Activated CD4-positive, alpha-beta memory T cell treated with anti-CD3 and anti-CD28 coated beads for 36 hours (primary cell): ENCODE measurements at regions of chr12 and their contacts with region 1.

Region 1: DNA sequence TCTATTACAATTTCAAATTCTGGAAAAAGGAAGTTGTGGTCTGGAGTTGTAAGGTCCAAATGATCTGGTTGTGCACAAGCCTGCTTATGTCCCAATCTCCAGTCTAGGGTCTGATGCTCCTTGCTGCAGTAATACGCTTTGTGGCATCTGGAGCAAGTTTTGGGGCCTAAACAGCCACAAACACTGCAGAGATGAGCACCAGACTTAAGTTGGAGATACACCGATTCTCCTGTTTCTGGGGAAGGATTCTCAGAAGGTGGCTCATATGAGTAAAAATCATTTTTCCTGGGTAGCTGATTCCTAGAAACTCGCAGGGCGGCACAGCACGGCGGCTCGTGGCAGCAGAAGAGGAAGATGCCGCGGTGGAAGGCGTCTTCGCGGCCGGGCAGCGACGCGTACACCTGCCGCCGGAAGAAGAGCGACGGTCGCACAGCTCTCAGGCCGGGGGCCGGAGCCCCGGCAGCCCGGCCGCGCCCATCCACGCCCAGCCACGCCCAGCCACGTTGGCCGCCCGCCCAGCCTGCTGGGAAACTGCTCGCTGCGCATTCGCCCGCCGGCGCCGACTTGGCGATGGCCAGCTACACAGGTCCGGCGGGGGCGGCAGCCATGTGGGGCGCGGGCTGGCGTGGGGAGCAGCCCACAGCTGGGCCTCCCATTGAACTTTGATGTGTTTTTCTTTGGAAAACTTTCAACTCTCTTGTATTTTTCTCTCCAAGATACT is 129.0 kb downstream of the ASCL4 start:
- DNase-seq: peak; percentile 83
- H3K4me3 Mint-ChIP-seq: peak overlapping the region; percentile 75
- H3K27ac Mint-ChIP-seq: no peak overlapping the region
- H3K4me1 Mint-ChIP-seq: peaks cover 8% of the 10 kb centered on the region
- H3K27me3 Mint-ChIP-seq: peaks cover 39% of the 10 kb centered on the region

Region 2: GRCh38 chr12:107702106-107702505 is 201.4 kb before region 1 on chr12:
- CTCF ChIA-PET with region 1: no interaction called
- POLR2A ChIA-PET with region 1: no interaction called
- intact Hi-C with region 1: no loop called
- DNase-seq: no peak
- H3K4me3 Mint-ChIP-seq: no peak overlapping the region
- H3K27ac Mint-ChIP-seq: no peak overlapping the region
- H3K4me1 Mint-ChIP-seq: no peaks in the 10 kb centered on the region
- H3K27me3 Mint-ChIP-seq: no peaks in the 10 kb centered on the region

Region 3: DNA sequence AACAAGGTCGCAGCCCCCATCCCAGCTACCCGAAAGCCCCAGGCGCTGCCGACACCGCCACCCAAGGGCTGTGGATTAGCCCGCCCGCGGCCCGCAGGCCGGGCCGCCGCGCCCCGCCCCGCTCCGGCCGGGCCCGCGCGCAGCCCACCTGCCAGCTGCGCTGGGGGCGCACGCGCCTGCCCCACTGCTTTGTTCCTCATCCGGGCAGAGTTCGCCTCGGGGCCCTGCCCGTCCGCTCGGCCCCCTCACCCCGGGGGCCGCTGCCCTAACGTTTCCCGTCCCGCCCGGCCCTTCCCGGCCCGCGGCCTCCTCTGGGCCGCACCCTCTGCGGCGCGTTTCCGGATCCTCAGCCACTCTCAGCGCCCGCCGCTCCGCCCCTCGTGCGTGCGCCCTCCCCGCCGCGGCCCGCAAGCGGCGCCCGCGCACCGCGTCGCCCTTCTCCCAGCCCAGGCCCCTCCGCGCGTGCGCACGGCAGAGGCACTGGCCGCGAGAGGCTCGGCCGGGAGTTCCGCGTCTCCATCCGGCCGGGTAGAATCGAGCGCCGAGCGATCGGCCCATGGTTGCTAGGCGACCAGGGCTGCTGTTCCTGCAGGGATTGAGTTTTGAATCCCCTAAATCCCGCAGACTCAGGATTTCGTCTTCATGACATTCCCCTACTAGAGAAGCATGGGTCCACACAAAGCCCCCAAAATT is 142.5 kb before region 1 on chr12 and contains the start of gene PRDM4:
- CTCF ChIA-PET with region 1: no interaction called
- POLR2A ChIA-PET with region 1: no interaction called
- intact Hi-C with region 1: loop called (anchors 5 kb)
- DNase-seq: peak; percentile 94
- H3K4me3 Mint-ChIP-seq: peak within 1 kb of the TSS; percentile 92
- H3K27ac Mint-ChIP-seq: peak within 1 kb of the TSS; percentile 88
- H3K4me1 Mint-ChIP-seq: peaks cover 27% of the 10 kb centered on the region
- H3K27me3 Mint-ChIP-seq: no peaks in the 10 kb centered on the region
- total RNA-seq, gene PRDM4: 33.4 to 39.0 TPM